ENCODE measurements at regions of chr7 and their contacts with region 1.

Region 1: GRCh38 chr7:25469669-25470068 is 241.4 kb upstream of the NPVF start:
- DNase-seq: no peak
- H3K4me3 ChIP-seq: no peak overlapping the region
- H3K27ac ChIP-seq: no peak overlapping the region
- H3K4me1 ChIP-seq: no peaks in the 10 kb centered on the region
- H3K27me3 ChIP-seq: no peaks in the 10 kb centered on the region
- CTCF ChIP-seq: no peak

Region 2: GRCh38 chr7:25399000-25399750 is 70.5 kb before region 1 on chr7:
- intact Hi-C with region 1: loop called (anchors 2 kb)
- DNase-seq: no peak
- H3K4me3 ChIP-seq: no peak overlapping the region
- H3K27ac ChIP-seq: no peak overlapping the region
- H3K4me1 ChIP-seq: no peaks in the 10 kb centered on the region
- H3K27me3 ChIP-seq: no peaks in the 10 kb centered on the region
- CTCF ChIP-seq: no peak

Region 3: DNA sequence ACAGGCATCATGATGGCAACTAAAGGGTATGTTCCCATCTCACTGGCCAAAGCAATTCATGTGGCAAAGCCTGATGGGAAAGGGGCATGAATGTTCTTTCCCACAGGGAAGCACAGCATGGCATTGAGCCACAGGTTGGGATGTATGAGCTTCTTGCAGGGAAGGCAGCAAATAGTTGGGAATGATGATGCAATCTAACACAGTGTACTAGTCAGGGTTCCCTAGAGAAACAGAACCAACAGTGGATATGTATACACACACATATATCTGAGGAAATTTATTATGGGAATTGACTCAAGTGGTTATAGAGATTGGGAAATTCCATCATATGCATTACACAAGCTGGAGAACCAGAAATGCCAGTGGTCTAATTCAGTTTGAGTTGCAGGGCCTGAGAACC is 12.2 kb after region 1 on chr7:
- intact Hi-C with region 1: no loop called
- DNase-seq: no peak
- H3K4me3 ChIP-seq: no peak overlapping the region
- H3K27ac ChIP-seq: no peak overlapping the region
- H3K4me1 ChIP-seq: no peaks in the 10 kb centered on the region
- H3K27me3 ChIP-seq: no peaks in the 10 kb centered on the region
- CTCF ChIP-seq: no peak

Measured in ascending aorta (tissue), 2 donors.